ENCODE measurements at regions of chr10 and their contacts with region 1.

Region 1: GRCh38 chr10:127906548-127907377 is at the start of gene PTPRE:
- DNase-seq: peak; percentile 72
- ATAC-seq: peak; percentile 93
- H3K4me3 ChIP-seq: peak within 1 kb of the TSS; percentile 66
- H3K27ac ChIP-seq: peak within 1 kb of the TSS; percentile 64
- H3K4me1 ChIP-seq: peaks cover 25% of the 10 kb centered on the region
- H3K27me3 ChIP-seq: no peaks in the 10 kb centered on the region
- CTCF ChIP-seq: peak; percentile 46
- total RNA-seq, gene PTPRE: 3.1 and 5.0 TPM in 2 replicates

Region 2: GRCh38 chr10:128011175-128011979 is 104.6 kb after region 1 on chr10:
- CTCF ChIA-PET with region 1: interaction called, 5 read pairs
- POLR2A ChIA-PET with region 1: no interaction called
- intact Hi-C with region 1: loop called (anchors 1 kb)
- DNase-seq: peak; percentile 74
- ATAC-seq: peak; percentile 87
- H3K4me3 ChIP-seq: no peak overlapping the region
- H3K27ac ChIP-seq: no peak overlapping the region
- H3K4me1 ChIP-seq: peaks cover 11% of the 10 kb centered on the region
- H3K27me3 ChIP-seq: no peaks in the 10 kb centered on the region
- CTCF ChIP-seq: peak; percentile 85